Gastrocnemius medialis (tissue), 4 donors: ENCODE measurements at regions of chr16 and their contacts with region 1.

Region 1: DNA sequence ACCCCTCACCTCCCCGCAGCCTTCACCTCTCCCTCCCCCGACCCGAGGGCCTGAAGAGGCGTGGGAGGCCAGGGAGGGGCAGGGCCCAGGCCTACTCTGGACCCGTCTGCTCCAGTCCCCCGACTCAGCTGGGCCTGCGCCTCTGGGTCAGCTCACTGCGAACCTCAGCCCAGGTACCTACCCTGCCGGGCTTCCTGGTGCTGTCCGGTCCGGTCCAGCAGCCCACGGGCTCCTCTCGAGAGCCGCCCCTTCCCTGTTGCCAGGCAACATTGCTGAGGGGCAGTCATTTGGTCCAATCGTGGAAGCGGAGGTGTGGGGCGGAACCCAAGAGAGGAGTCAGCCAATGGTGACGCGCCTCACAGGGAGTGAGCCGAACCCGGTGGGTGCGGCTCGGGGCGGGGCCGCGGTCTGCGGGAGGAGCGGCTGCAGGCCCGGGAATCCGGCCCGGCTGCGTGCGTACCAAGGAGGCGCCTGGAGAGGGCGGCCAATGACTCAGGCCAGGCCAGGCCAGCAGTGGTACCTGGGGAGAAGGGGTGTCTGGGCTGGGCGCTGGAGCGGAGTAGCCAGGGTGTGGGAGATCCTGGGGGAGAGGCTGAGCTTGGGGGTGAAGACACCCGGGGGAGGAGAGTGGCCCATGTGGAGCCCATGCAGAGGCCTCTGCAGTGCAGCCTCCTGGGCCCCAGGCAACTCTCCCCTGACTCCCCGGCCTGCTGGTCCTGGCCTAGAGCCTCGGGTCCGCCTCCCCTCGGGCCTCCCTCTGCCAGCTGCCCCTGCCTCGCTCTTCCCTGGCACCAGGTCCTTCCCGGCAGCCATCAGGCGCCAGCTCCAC is at the start of gene MEAK7:
- DNase-seq: peak; percentile 97 to 98
- ATAC-seq: peak; percentile 97 to 98
- H3K4me3 ChIP-seq: peak within 1 kb of the TSS; percentile 79 to 95 (median 90)
- H3K27ac ChIP-seq: peak within 1 kb of the TSS; percentile 89 to 94 (median 92)
- H3K4me1 ChIP-seq: peaks cover 14 to 27% of the 10 kb centered on the region in 2 donors
- H3K27me3 ChIP-seq: no peaks in the 10 kb centered on the region
- CTCF ChIP-seq: no peak
- POLR2A ChIP-seq: peak; percentile 75 to 76
- total RNA-seq, gene MEAK7: 2.6 to 7.1 (median 5.0) TPM

Region 2: GRCh38 chr16:84459941-84460405 is 44.7 kb before region 1 on chr16:
- in situ Hi-C with region 1: no loop called
- intact Hi-C with region 1: no loop called
- DNase-seq: no peak
- ATAC-seq: no peak
- H3K4me3 ChIP-seq: no peak overlapping the region
- H3K27ac ChIP-seq: no peak overlapping the region
- H3K4me1 ChIP-seq: no peaks in the 10 kb centered on the region
- H3K27me3 ChIP-seq: no peaks in the 10 kb centered on the region
- CTCF ChIP-seq: no peak
- POLR2A ChIP-seq: no peak

Region 3: GRCh38 chr16:84537491-84538151 is 33.0 kb after region 1 on chr16:
- in situ Hi-C with region 1: no loop called
- intact Hi-C with region 1: no loop called
- DNase-seq: no peak
- ATAC-seq: no peak
- H3K4me3 ChIP-seq: no peak overlapping the region
- H3K27ac ChIP-seq: no peak overlapping the region
- H3K4me1 ChIP-seq: peaks cover 0 to 2% of the 10 kb centered on the region in 2 donors
- H3K27me3 ChIP-seq: no peaks in the 10 kb centered on the region
- CTCF ChIP-seq: no peak
- POLR2A ChIP-seq: no peak

Region 4: GRCh38 chr16:84617791-84618580 is 113.4 kb after region 1 on chr16 and contains the start of gene COTL1:
- in situ Hi-C with region 1: no loop called
- intact Hi-C with region 1: loop called (anchors 2 kb)
- DNase-seq: peak; percentile 84 to 89
- ATAC-seq: peak; percentile 80 to 87
- H3K4me3 ChIP-seq: peak within 1 kb of the TSS; percentile 56 to 81 (median 68)
- H3K27ac ChIP-seq: peak within 1 kb of the TSS in 3 of 4 donors; percentile 44 to 54 (median 52)
- H3K4me1 ChIP-seq: peaks cover 12 to 14% of the 10 kb centered on the region in 2 donors
- H3K27me3 ChIP-seq: peaks cover 25 to 30% (median 26%) of the 10 kb centered on the region in 3 donors
- CTCF ChIP-seq: no peak
- POLR2A ChIP-seq: peak; percentile 62 to 81
- total RNA-seq, gene COTL1: 2.8 to 8.7 (median 6.2) TPM

Region 5: DNA sequence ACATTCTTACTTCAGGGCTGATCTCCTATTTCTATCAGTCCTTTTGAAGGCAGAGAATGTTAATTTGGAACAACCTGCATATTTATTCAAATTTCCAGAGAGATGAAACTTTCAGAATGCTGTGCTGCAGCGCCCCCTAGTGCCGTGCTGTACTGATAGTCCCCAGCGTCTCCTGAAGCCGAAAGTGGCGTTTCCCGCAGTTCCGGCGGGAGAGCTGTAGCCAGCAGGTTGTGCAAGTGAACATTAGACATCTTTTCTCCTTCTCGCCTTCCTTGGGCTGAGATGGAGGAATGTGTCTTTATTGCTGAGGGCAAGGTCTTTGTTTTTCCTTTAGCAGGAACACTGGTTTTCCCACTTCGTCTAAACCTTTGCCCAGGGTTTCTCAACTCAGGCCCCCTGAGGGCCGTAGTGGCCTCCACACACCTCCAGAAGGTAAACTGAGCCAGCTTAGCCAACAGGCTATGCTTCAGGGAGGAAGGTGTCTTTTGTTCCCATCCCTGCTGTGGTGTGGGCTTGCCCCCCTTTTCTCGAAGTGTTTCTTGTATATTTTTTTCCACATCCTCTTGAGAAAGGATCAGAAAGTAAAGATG is 221.5 kb after region 1 on chr16:
- in situ Hi-C with region 1: no loop called
- intact Hi-C with region 1: loop called (anchors 2 kb)
- DNase-seq: peak; percentile 66 to 81
- ATAC-seq: peak; percentile 56 to 78
- H3K4me3 ChIP-seq: no peak overlapping the region
- H3K27ac ChIP-seq: peak overlapping the region in 1 of 4 donors; percentile 1
- H3K4me1 ChIP-seq: peaks cover 44 to 45% of the 10 kb centered on the region in 2 donors
- H3K27me3 ChIP-seq: no peaks in the 10 kb centered on the region
- CTCF ChIP-seq: peak; percentile 87 to 94 (median 90)
- POLR2A ChIP-seq: no peak

Region 6: GRCh38 chr16:84985079-84986065 is 480.7 kb after region 1 on chr16:
- in situ Hi-C with region 1: loop called in 1 of 4 experiments (anchors 25 kb)
- intact Hi-C with region 1: no loop called
- DNase-seq: peak; percentile 45 to 81
- ATAC-seq: peak; percentile 65 to 77
- H3K4me3 ChIP-seq: no peak overlapping the region
- H3K27ac ChIP-seq: peak overlapping the region; percentile 76 to 82 (median 80)
- H3K4me1 ChIP-seq: peaks cover 39 to 42% of the 10 kb centered on the region in 2 donors
- H3K27me3 ChIP-seq: no peaks in the 10 kb centered on the region
- CTCF ChIP-seq: no peak
- POLR2A ChIP-seq: no peak